ENCODE measurements at regions of chr3 and their contacts with region 1.

Region 1: DNA sequence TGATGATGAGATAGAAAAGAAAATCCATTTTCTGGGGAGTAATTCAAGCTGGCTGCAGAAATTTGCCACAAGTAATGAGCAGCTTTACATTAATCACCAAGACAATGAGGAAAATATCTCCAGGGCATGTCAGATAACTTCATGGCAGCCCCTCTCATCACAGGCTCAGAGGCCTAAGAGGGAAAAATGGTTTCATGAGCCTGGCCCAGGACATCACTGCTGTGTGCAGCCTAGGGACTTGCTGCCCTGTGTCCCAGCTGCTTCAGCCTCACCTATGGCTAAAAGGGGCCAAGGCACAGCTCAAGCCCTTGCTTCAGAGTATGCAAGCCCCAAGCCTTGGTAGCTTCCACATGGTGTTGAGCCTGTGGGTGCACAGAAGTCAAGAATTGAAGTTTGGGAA is 161.7 kb downstream of the OPA1 start:
- DNase-seq: no peak
- ATAC-seq: no peak
- H3K4me3 ChIP-seq: no peak overlapping the region
- H3K27ac ChIP-seq: no peak overlapping the region
- H3K4me1 ChIP-seq: no peaks in the 10 kb centered on the region
- H3K27me3 ChIP-seq: no peaks in the 10 kb centered on the region
- CTCF ChIP-seq: no peak
- POLR2A ChIP-seq: no peak
- RAD21 ChIP-seq: no peak

Region 2: GRCh38 chr3:193673845-193674244 is 80.9 kb before region 1 on chr3:
- CTCF ChIA-PET with region 1: no interaction called
- POLR2A ChIA-PET with region 1: no interaction called
- dilution Hi-C with region 1: no loop called
- in situ Hi-C with region 1: no loop called
- intact Hi-C with region 1: loop called (anchors 5 kb)
- DNase-seq: no peak
- ATAC-seq: no peak
- H3K4me3 ChIP-seq: no peak overlapping the region
- H3K27ac ChIP-seq: no peak overlapping the region
- H3K4me1 ChIP-seq: no peaks in the 10 kb centered on the region
- H3K27me3 ChIP-seq: no peaks in the 10 kb centered on the region
- CTCF ChIP-seq: no peak
- POLR2A ChIP-seq: no peak
- RAD21 ChIP-seq: no peak

Region 3: GRCh38 chr3:193743702-193744047 is 11.0 kb before region 1 on chr3:
- CTCF ChIA-PET with region 1: interaction called, 3 read pairs
- POLR2A ChIA-PET with region 1: interaction called, 13 read pairs
- dilution Hi-C with region 1: no loop called
- in situ Hi-C with region 1: no loop called
- intact Hi-C with region 1: no loop called
- DNase-seq: no peak
- ATAC-seq: no peak
- H3K4me3 ChIP-seq: no peak overlapping the region
- H3K27ac ChIP-seq: no peak overlapping the region
- H3K4me1 ChIP-seq: no peaks in the 10 kb centered on the region
- H3K27me3 ChIP-seq: peaks cover 17% of the 10 kb centered on the region
- CTCF ChIP-seq: no peak
- POLR2A ChIP-seq: no peak
- RAD21 ChIP-seq: no peak

Region 4: GRCh38 chr3:194497821-194498598 is 743.3 kb after region 1 on chr3:
- CTCF ChIA-PET with region 1: no interaction called
- POLR2A ChIA-PET with region 1: no interaction called
- dilution Hi-C with region 1: no loop called
- in situ Hi-C with region 1: no loop called
- intact Hi-C with region 1: no loop called
- DNase-seq: no peak
- ATAC-seq: no peak
- H3K4me3 ChIP-seq: no peak overlapping the region
- H3K27ac ChIP-seq: peak overlapping the region; percentile 23; the same call in 1 of the 2 replicates
- H3K4me1 ChIP-seq: peaks cover 18% of the 10 kb centered on the region
- H3K27me3 ChIP-seq: no peaks in the 10 kb centered on the region
- CTCF ChIP-seq: no peak
- POLR2A ChIP-seq: no peak
- RAD21 ChIP-seq: no peak

Measured in IMR-90 (cell line).